ENCODE measurements at regions of chr13 and their contacts with region 1.

Region 1: DNA sequence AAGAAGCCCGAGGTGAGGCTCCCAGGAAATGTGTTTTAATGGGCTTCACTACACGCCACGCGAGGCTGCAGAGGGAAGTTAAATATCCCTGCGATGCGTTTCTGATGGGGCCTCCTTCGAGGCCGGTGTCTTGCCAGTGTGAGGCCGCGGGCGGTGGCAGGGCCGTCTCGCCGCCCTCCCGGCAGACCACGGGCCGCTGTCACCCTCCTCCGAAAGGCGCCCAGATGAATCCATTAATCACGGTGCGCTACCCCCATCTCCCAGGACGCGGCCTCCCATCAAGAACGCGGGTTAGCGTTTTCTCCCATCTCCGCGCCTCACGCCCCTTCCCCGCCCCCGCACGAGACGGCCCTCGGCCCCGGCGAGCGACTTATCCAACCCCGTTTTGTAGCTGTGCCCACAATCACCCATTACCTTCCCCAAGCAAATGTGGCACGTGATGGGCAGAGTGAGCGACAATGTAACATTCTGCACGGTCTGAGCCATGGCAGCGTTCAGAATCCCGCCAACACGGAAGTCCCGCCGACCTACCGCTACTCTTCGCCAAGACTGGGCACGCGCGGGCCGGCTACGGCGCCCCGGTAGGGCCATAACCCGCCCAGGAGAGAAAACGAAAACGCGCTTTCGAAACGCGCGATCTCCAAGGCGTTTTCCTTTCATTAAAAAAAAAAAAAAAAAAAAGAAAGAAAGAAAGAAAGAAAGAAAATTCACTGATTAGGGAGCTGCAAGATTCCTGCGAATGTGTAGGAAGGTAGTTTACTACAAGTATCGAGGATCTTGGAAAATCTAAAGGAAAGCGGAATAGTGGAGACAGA is at the start of gene OBI1:
- DNase-seq: peak; percentile 92 to 93
- ATAC-seq: peak; percentile 95 to 99 (median 98)
- H3K4me3 ChIP-seq: peak within 1 kb of the TSS; percentile 59 to 97 (median 90)
- H3K27ac ChIP-seq: peak within 1 kb of the TSS; percentile 23 to 87 (median 83)
- H3K4me1 ChIP-seq: peaks cover 0 to 40% (median 33%) of the 10 kb centered on the region in 9 donors
- H3K27me3 ChIP-seq: peaks cover 0 to 5% (median 0%) of the 10 kb centered on the region in 7 donors
- CTCF ChIP-seq: no peak
- total RNA-seq, gene OBI1: 6.2 to 12.3 (median 9.6) TPM

Region 2: GRCh38 chr13:78603240-78603957 is 55.4 kb before region 1 on chr13 and contains the start of gene POU4F1:
- intact Hi-C with region 1: loop called in 2 of 10 experiments (anchors 5 to 10 kb)
- DNase-seq: peak in 1 of 2 donors; percentile 33
- ATAC-seq: peak in 4 of 8 donors; percentile 26 to 61 (median 36)
- H3K4me3 ChIP-seq: peak within 1 kb of the TSS; percentile 18 to 49 (median 38)
- H3K27ac ChIP-seq: no peak within 1 kb of the TSS
- H3K4me1 ChIP-seq: peaks cover 5 to 51% (median 33%) of the 10 kb centered on the region in 9 donors
- H3K27me3 ChIP-seq: peaks cover 51 to 96% (median 95%) of the 10 kb centered on the region in 7 donors
- CTCF ChIP-seq: no peak
- total RNA-seq, gene POU4F1: 0.09 TPM in 1 of 10 donors, not detected in the others

Measured in heart right ventricle (tissue), 16 donors.